ENCODE measurements at regions of chr9 and their contacts with region 1.

Region 1: GRCh38 chr9:8521112-8521511 is 721.5 kb upstream of the DMAC1 start:
- DNase-seq: no peak
- ATAC-seq: no peak
- H3K4me3 ChIP-seq: no peak overlapping the region
- H3K27ac ChIP-seq: no peak overlapping the region
- H3K4me1 ChIP-seq: no peaks in the 10 kb centered on the region
- H3K27me3 ChIP-seq: no peaks in the 10 kb centered on the region
- CTCF ChIP-seq: no peak
- EP300 ChIP-seq: no peak
- POLR2A ChIP-seq: no peak
- RAD21 ChIP-seq: no peak

Region 2: GRCh38 chr9:8579661-8580060 is 58.5 kb after region 1 on chr9:
- CTCF ChIA-PET with region 1: no interaction called
- POLR2A ChIA-PET with region 1: no interaction called
- RAD21 ChIA-PET with region 1: no interaction called
- SMC1A ChIA-PET with region 1: no interaction called
- in situ Hi-C with region 1: loop called (anchors 10 kb)
- intact Hi-C with region 1: no loop called
- DNase-seq: no peak
- ATAC-seq: no peak
- H3K4me3 ChIP-seq: no peak overlapping the region
- H3K27ac ChIP-seq: no peak overlapping the region
- H3K4me1 ChIP-seq: no peaks in the 10 kb centered on the region
- H3K27me3 ChIP-seq: no peaks in the 10 kb centered on the region
- CTCF ChIP-seq: no peak
- EP300 ChIP-seq: no peak
- POLR2A ChIP-seq: no peak
- RAD21 ChIP-seq: no peak

Region 3: DNA sequence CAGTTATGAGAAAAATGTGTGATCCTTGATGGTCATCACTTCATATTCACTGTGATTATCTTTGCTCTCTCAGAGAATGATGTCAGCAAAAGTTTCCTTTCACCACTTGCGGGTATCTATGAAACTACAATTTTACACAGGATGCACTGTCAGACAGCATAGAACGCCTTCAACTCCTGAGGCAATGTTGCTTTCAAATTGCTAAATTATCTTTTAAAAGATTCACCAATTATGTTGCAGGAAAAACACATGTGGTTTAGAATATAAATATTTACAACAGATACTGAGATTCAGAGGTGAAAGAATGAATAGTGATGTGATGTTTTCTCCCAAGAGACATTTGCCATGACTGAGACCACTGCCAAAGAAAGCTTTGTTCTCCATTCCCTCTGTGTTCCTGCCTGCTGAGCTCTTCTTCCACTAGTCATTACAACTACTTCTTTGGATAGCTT is 158.3 kb after region 1 on chr9:
- CTCF ChIA-PET with region 1: no interaction called
- POLR2A ChIA-PET with region 1: no interaction called
- RAD21 ChIA-PET with region 1: no interaction called
- SMC1A ChIA-PET with region 1: no interaction called
- in situ Hi-C with region 1: no loop called
- intact Hi-C with region 1: no loop called
- DNase-seq: no peak
- ATAC-seq: no peak
- H3K4me3 ChIP-seq: no peak overlapping the region
- H3K27ac ChIP-seq: no peak overlapping the region
- H3K4me1 ChIP-seq: no peaks in the 10 kb centered on the region
- H3K27me3 ChIP-seq: no peaks in the 10 kb centered on the region; a peak in 1 of 4 replicates
- CTCF ChIP-seq: no peak
- EP300 ChIP-seq: no peak
- POLR2A ChIP-seq: no peak
- RAD21 ChIP-seq: no peak